AG04449 (cell line): ENCODE measurements at regions of chr6 and their contacts with region 1.

Region 1: DNA sequence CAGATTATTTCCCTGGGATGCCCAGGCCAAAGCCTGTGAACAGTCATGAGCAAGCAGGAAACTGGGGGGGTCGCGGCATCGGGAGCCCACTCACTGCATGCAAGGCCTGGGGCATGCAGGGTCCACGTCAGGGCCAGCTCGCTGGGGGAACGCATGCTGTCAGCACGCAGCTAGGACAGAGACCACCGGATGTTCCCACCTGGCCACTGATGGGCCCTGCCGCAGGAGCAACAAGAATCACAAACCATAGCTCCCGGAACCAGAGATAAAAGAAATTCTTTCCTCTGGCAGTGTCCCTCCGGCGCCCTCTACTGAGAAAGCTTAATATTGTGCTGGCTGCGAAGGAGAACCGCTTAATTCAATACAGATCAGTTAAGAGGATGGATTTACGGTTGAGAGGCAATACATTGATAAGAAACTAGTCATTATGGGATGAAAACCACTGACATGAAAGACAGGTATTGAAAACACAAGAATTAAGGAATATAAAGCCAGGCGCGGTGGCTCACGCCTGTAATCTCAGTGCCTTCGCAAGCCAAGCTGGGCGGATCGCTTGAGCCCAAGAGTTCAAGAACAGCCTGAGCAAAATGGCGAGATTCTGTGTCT is 32.6 kb downstream of the C6orf15 start:
- DNase-seq: no peak
- H3K4me3 ChIP-seq: peak overlapping the region; percentile 13; the same call in 1 of the 2 replicates
- CTCF ChIP-seq: peak; percentile 68

Region 2: DNA sequence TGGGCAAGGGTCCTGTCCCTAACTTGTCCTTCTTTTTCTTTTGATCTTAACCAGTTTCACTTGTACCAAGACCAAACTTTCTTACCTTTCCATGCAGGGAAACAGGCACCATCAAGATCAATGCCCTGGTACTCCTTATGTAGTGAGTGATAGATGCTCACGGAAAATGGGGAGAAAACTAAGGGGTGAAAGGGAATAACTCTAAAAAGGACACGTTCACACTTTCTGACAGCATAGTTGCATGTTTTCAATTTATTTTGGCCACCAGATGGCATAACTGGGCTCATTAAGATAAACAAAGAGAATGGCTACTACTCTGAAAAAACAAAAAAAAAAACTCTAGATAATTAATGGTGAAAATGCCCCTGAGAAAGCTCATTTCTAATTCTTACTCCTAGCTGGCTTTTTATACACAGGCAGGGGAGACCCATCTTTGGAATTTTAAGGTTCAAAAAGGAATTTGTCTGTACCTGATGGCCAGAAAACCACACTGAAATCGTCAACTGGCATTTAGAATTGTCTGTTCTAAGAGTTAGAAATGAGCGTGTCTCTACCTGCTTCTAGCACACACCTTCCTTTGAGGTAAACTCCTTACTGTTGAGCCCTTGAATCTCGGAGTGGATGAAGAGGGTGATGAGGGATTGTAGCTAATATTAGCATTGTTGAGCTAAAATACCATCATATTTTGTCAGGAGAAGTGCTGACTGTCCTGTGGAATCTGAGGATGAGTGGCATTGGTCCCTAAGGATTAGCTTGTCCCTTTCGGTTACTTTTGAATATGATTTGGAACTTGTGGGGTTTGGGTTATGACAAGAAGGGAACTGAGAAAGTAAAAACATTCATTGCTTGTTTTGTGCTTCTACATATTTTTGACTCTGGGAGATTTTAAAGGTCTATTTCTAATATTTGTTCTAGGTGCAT is 257.6 kb before region 1 on chr6:
- CTCF ChIA-PET with region 1: interaction called, 78 read pairs
- POLR2A ChIA-PET with region 1: no interaction called
- DNase-seq: no peak
- H3K4me3 ChIP-seq: no peak overlapping the region
- CTCF ChIP-seq: peak; percentile 33

Region 3: DNA sequence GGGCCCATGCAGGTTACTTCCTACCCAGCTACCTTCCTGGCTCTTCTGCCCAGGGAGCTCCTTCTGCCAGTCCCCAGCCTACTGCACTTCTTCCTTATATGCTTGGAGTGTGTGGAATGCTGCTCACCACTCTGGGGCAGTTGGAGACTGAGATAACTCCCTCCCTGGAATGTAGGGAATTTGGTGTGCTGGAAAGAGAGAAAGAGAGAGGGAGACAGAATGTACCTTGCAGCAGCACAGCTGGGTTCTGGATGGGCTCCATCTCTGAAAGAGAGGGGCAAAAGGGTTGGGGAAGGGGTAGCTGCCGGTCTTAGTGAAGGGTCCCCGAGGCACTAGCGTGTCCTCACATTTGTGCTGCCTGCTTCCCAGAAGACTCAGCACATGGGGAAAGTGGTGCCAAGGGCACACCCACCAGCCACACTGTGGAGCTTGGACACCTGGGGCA is 235.6 kb before region 1 on chr6:
- CTCF ChIA-PET with region 1: interaction called, 11 read pairs
- POLR2A ChIA-PET with region 1: no interaction called
- DNase-seq: no peak
- H3K4me3 ChIP-seq: no peak overlapping the region
- CTCF ChIP-seq: no peak

Region 4: GRCh38 chr6:30883685-30884520 is 195.9 kb before region 1 on chr6 and contains the start of gene DDR1:
- CTCF ChIA-PET with region 1: interaction called, 14 read pairs
- POLR2A ChIA-PET with region 1: no interaction called
- DNase-seq: no peak
- H3K4me3 ChIP-seq: peak within 1 kb of the TSS; percentile 82
- CTCF ChIP-seq: no peak

Region 5: DNA sequence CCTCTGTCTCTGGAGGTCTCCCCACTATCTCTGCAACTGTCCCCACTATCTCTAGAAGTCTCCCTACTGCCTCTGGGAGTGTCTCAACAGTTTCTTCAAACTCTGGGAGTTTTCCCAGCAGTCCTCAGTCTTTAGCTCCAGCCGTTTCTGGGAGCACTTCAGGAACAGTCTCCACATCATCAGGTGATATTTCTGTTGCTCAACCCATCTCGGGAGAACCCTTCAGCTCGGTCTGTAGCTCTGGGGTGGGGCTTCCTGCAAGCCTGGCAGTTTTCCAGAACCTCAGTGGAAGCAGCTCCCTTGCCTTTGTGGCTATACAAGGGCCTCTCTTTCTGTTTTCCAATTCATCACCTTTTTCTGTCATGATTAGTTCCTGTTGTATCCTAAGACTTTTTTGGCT is 144.7 kb before region 1 on chr6:
- CTCF ChIA-PET with region 1: interaction called, 15 read pairs
- POLR2A ChIA-PET with region 1: no interaction called
- DNase-seq: no peak
- H3K4me3 ChIP-seq: no peak overlapping the region
- CTCF ChIP-seq: no peak

Region 6: GRCh38 chr6:31058128-31058894 is 21.4 kb before region 1 on chr6:
- CTCF ChIA-PET with region 1: interaction called, 20 read pairs
- POLR2A ChIA-PET with region 1: no interaction called
- DNase-seq: peak; percentile 79
- H3K4me3 ChIP-seq: no peak overlapping the region
- CTCF ChIP-seq: peak; percentile 53

Region 7: DNA sequence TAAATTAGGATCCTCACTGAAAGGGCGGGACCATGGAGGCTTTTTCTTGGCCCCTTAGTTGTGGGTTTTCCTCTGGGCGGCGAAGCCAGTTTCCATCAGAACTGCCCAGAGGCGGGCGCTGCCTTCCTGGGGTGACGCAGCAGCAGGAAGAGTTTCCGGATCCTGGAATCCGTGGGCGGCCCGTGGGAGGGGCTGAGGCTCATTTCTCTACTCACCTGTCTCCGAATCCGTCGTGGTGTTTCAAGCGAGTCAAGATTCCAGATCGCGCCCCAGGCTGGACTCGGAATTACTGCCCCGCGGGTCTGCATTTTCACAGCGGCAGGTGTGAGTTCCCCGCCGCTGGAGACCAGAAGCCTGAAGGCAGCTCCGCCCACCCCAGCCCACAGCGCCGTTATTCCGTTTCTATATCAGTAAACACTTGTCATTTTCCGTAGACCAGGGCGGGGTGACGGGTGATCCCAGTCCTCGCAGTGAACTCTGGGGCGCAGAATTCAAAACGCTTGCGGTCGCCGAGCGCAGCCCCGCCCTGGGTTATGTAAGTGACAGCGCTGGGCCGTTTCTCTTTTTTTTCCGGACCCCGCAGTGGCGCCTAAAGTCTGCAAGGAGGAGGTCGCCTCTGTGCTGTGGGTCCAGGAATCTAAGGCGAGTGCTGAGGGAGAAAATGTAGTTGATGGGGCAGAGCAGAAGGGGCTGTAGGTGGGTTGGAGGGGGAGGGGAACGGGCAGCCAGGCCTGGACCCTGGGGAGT is 118.0 kb after region 1 on chr6:
- CTCF ChIA-PET with region 1: interaction called, 10 read pairs
- POLR2A ChIA-PET with region 1: no interaction called
- DNase-seq: no peak
- H3K4me3 ChIP-seq: peak overlapping the region; percentile 72
- CTCF ChIP-seq: no peak

Region 8: GRCh38 chr6:31426395-31427354 is 346.9 kb after region 1 on chr6:
- CTCF ChIA-PET with region 1: no interaction called
- POLR2A ChIA-PET with region 1: no interaction called
- DNase-seq: no peak
- H3K4me3 ChIP-seq: no peak overlapping the region
- CTCF ChIP-seq: no peak